A673 (cell line): ENCODE measurements at regions of chr21 and their contacts with region 1.

Region 1: DNA sequence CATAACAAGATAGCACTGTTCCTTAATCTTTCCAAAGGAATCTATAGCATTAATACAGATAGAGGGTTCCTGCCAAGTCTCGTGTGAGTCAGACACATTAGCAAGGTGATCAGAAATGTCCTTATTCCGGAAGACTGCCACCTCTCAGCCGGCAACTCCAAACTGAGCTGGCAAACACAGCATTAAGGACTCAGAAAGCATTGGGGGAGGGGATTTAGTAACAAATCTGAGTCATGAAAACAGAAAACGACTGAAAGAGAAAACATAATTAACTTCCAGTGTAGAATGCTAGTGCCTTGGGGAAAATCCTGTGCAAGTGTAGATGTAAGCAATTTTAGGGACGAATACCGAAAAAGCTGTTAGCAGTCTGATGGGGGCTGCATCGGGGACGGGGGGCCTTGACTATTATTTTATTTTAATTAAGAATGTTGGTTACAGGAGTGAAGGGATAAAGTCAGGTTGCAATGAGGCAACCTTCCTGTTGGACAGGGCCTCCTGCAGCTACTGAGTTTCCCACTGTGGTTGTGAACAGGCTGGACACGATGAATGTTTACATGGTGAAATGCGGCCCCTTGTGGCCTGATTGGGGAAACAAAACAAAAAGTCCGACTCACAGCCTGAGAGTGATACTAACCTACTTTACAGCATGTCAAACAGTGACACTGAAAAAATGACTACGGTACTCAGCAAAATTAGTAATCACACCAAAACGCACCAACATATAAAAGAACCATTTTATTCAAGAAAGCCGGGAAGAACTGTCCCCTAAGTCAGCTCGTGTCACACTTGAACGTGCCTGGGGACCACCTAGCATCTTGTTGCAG is 20.7 kb downstream of the MIS18A start:
- DNase-seq: peak; percentile 81
- H3K4me3 ChIP-seq: no peak overlapping the region
- H3K27ac ChIP-seq: no peak overlapping the region
- H3K4me1 ChIP-seq: no peaks in the 10 kb centered on the region
- H3K27me3 ChIP-seq: peaks cover 3% of the 10 kb centered on the region
- CTCF ChIP-seq: peak; percentile 79

Region 2: GRCh38 chr21:31786164-31786920 is 471.8 kb before region 1 on chr21:
- CTCF ChIA-PET with region 1: interaction called, 9 read pairs
- POLR2A ChIA-PET with region 1: no interaction called
- intact Hi-C with region 1: loop called (anchors 1 kb)
- DNase-seq: no peak
- H3K4me3 ChIP-seq: no peak overlapping the region
- H3K27ac ChIP-seq: no peak overlapping the region
- H3K4me1 ChIP-seq: no peaks in the 10 kb centered on the region
- H3K27me3 ChIP-seq: no peaks in the 10 kb centered on the region
- CTCF ChIP-seq: no peak; the same call in 1 of the 2 replicates

Region 3: GRCh38 chr21:31866077-31866511 is 392.1 kb before region 1 on chr21:
- CTCF ChIA-PET with region 1: interaction called, 5 read pairs
- POLR2A ChIA-PET with region 1: no interaction called
- intact Hi-C with region 1: loop called (anchors 1 kb)
- DNase-seq: peak; percentile 76
- H3K4me3 ChIP-seq: no peak overlapping the region
- H3K27ac ChIP-seq: no peak overlapping the region
- H3K4me1 ChIP-seq: no peaks in the 10 kb centered on the region
- H3K27me3 ChIP-seq: peaks cover 21% of the 10 kb centered on the region
- CTCF ChIP-seq: peak; percentile 91

Region 4: DNA sequence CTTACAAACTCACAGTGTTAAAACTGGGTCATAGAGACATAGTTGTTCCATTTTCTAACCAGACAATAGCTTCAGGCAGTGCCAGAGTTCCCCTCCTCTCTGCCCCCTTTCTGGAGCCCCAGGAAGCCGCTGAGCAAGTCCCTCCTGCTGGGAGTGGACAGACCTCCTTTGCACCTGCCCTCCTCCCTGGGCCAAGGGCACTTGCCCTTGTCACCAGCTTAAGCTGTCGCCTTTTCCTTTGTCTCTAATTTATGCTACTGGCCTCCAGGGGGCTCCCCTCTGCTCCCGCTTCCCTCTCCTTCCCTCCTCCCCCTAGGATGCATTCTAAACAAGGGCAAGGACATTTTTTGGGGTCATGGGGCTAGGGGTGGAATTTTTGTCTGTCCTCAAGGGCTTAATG is 161.8 kb before region 1 on chr21:
- CTCF ChIA-PET with region 1: interaction called, 3 read pairs
- POLR2A ChIA-PET with region 1: no interaction called
- intact Hi-C with region 1: loop called (anchors 1 kb)
- DNase-seq: peak; percentile 30
- H3K4me3 ChIP-seq: no peak overlapping the region
- H3K27ac ChIP-seq: no peak overlapping the region
- H3K4me1 ChIP-seq: no peaks in the 10 kb centered on the region
- H3K27me3 ChIP-seq: peaks cover 5% of the 10 kb centered on the region
- CTCF ChIP-seq: peak; percentile 59